Heart left ventricle (tissue), 16 donors: ENCODE measurements at regions of chr3 and their contacts with region 1.

Region 1: GRCh38 chr3:107064445-107065060 is 312.7 kb upstream of the CCDC54 start:
- DNase-seq: peak in 4 of 5 donors; percentile 57 to 70 (median 64)
- ATAC-seq: peak; percentile 77 to 90 (median 88)
- H3K4me3 ChIP-seq: no peak overlapping the region
- H3K27ac ChIP-seq: peak overlapping the region in 6 of 12 donors; percentile 6 to 37 (median 17)
- H3K4me1 ChIP-seq: peaks cover 0 to 34% (median 18%) of the 10 kb centered on the region in 12 donors
- H3K27me3 ChIP-seq: no peaks in the 10 kb centered on the region
- CTCF ChIP-seq: peak; percentile 71 to 92 (median 82)
- POLR2A ChIP-seq: no peak

Region 2: GRCh38 chr3:106824856-106825255 is 239.7 kb before region 1 on chr3:
- intact Hi-C with region 1: loop called in 9 of 10 experiments (anchors 2 to 5 kb)
- DNase-seq: peak in 1 of 5 donors; percentile 22
- ATAC-seq: peak; percentile 68 to 84 (median 81)
- H3K4me3 ChIP-seq: no peak overlapping the region
- H3K27ac ChIP-seq: no peak overlapping the region
- H3K4me1 ChIP-seq: peaks cover 0 to 26% (median 7%) of the 10 kb centered on the region in 12 donors
- H3K27me3 ChIP-seq: no peaks in the 10 kb centered on the region
- CTCF ChIP-seq: peak in 10 of 12 donors; percentile 18 to 61 (median 36)
- POLR2A ChIP-seq: no peak

Region 3: DNA sequence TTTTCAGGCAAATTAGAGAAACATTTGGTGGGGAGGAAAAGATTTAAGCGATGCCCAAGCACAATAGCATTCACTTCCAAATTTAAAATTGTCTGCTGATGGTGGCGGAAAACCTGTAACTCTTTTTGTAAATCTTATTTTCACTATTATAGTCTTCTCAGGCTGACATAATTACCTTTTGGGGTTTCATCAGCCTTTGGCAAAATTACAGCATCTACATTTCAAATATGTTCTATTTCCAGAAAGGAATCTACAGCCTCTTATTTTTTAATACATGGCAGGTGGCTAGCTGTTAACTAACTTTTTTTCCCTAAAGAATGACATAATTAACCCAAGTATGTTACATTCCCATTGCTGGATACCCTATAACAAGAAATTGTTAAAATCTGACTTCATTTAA is 78.8 kb before region 1 on chr3:
- intact Hi-C with region 1: no loop called
- DNase-seq: no peak
- ATAC-seq: no peak
- H3K4me3 ChIP-seq: no peak overlapping the region
- H3K27ac ChIP-seq: no peak overlapping the region
- H3K4me1 ChIP-seq: no peaks in the 10 kb centered on the region
- H3K27me3 ChIP-seq: no peaks in the 10 kb centered on the region
- CTCF ChIP-seq: no peak
- POLR2A ChIP-seq: no peak